Activated CD4-positive, alpha-beta memory T cell treated with anti-CD3 and anti-CD28 coated beads, Interleukin-2, amount 10 ng/mL, durations not matched to agents 7 days and 5 days (primary cell): ENCODE measurements at regions of chr10 and their contacts with region 1.

Region 1: GRCh38 chr10:121900443-121901174 is 27.2 kb downstream of the ATE1 start:
- DNase-seq: no peak
- H3K4me3 Mint-ChIP-seq: no peak overlapping the region
- H3K27ac Mint-ChIP-seq: no peak overlapping the region
- H3K4me1 Mint-ChIP-seq: peaks cover 3% of the 10 kb centered on the region
- H3K27me3 Mint-ChIP-seq: no peaks in the 10 kb centered on the region

Region 2: DNA sequence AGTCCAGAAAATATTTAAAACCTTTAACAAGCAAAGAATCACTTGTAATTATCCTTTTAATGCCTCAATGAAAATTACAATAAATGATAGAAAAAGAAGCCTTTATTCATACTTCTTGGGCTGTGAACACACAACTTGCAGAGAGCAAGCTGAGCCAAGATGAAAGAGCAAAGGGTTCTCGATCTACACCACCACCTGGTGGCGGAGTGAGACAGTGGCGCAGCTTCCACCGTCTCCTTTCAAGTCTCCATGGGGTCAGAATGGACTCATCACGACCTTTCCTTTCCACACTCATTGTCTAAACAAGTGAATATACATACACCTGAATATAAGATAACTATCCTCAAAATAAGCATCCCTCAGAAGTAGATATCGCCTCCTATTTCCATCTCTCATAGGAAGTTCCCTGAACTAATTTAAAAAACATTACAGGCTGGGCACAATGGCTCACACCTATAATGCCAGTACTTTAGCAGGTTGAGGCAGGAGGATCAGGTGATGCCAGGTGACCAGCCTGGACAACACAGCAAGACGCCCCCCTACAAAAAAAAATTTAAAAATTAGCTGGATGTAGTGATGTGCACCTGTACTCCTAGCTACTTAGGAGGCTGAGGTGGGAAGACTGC is 13.5 kb before region 1 on chr10:
- CTCF ChIA-PET with region 1: interaction called, 15 read pairs
- POLR2A ChIA-PET with region 1: no interaction called
- DNase-seq: peak; percentile 52
- H3K4me3 Mint-ChIP-seq: no peak overlapping the region
- H3K27ac Mint-ChIP-seq: no peak overlapping the region
- H3K4me1 Mint-ChIP-seq: no peaks in the 10 kb centered on the region
- H3K27me3 Mint-ChIP-seq: no peaks in the 10 kb centered on the region